IMR-90 (cell line): ENCODE measurements at regions of chr17 and their contacts with region 1.

Region 1: DNA sequence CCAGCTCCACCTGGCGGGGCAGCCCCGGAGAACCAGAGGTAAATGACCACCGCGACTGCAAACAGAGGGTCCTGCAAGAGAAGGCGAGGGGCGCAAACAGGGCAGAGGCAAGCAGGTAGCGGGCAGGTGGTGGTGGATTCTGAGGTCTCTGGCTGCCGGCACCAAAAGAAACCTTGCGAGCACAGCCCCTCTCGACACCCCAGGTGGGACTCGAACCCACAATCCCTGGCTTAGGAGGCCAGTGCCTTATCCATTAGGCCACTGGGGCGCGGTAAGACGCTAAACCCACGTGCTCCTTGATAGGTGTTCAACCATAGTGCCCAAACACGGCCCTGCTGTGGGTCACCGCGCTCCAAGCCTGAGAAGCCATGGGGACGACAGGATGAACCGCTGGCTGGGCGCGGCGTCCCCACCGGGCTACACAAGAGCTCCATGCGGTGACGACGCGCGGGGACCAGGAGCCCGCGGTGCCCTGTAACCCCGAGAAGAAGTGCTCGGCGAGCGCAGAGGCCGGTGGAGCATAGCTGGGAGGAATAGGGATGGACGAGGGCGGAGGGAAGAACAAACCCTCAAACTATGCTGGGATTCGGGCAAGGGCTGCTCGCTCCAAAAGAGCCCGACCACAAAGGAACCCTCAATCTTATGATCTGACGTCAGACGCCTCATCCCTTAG is 12.4 kb downstream of the ATP5PD start:
- DNase-seq: peak; percentile 85
- ATAC-seq: peak; percentile 61
- H3K4me3 ChIP-seq: peak overlapping the region; percentile 70
- H3K27ac ChIP-seq: peak overlapping the region; percentile 73
- H3K4me1 ChIP-seq: peaks cover 2% of the 10 kb centered on the region
- H3K27me3 ChIP-seq: no peaks in the 10 kb centered on the region
- CTCF ChIP-seq: no peak
- POLR2A ChIP-seq: no peak
- RAD21 ChIP-seq: no peak

Region 2: DNA sequence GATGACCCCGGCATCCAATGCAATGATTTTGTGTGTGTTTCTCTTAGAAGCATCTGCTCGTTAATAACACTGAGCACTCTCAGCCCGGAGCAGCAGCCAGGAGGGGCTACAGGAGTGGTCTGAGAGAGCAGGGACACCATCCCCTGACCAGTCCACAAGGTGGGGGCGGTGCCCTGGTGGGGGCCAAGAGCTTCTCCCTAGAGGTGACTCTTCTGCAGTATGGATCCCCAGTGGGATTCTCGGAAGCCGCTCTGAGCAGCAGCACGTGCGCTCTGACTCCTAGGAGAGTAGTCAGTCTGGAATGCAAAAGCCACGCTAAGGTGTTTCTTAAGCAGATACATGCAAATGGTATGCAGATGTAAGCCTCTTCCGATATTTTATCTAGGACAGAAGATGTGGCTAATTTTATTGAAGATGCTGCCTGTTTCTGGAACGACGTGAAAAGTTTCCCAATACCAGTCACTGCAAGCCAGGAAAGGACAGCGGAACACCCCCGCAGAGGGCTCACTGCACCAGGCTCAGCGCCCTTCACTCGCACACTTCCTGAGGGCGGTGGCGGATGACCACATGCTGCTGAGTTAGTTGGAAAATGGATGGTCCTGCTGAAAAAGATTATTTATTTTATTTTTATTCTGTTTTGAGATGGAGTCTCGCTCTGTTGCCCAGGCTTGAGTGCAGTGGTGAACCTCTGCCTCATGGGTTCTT is 151.2 kb before region 1 on chr17:
- CTCF ChIA-PET with region 1: no interaction called
- POLR2A ChIA-PET with region 1: no interaction called
- dilution Hi-C with region 1: no loop called
- in situ Hi-C with region 1: no loop called
- intact Hi-C with region 1: no loop called
- DNase-seq: peak; percentile 20
- ATAC-seq: no peak
- H3K4me3 ChIP-seq: no peak overlapping the region
- H3K27ac ChIP-seq: no peak overlapping the region
- H3K4me1 ChIP-seq: no peaks in the 10 kb centered on the region
- H3K27me3 ChIP-seq: peaks cover 54% of the 10 kb centered on the region
- CTCF ChIP-seq: no peak
- POLR2A ChIP-seq: no peak
- RAD21 ChIP-seq: no peak

Region 3: DNA sequence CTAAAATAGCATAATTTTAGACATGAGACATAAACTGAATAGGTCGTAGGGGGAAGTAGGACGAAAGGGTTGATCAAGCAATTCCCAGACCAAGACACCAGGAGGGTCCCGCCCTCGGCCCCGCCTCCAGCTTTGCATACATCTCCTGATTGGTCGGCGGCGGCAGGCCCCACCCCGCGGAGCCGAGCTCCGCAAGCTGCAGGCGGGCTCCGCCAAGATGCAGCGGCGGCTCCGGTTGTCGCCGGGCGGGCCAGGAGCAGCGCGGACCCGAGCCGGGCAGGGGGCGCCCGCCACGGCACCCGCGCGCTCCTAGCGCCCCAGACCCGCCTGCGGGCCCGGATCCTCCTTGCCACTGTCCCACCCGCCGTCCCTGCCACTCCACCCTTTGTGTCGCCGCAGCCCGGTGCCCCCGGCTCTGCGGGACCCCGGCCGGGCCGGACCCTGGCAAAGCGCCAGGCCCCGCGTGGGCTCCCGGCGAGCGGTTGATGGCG is 46.9 kb before region 1 on chr17 and contains the start of gene CDR2L:
- CTCF ChIA-PET with region 1: interaction called, 5 read pairs
- POLR2A ChIA-PET with region 1: interaction called, 4 read pairs
- dilution Hi-C with region 1: no loop called
- in situ Hi-C with region 1: no loop called
- intact Hi-C with region 1: loop called (anchors 1 kb)
- DNase-seq: peak; percentile 89
- ATAC-seq: peak; percentile 92
- H3K4me3 ChIP-seq: peak within 1 kb of the TSS; percentile 95
- H3K27ac ChIP-seq: peak within 1 kb of the TSS; percentile 92
- H3K4me1 ChIP-seq: peaks cover 12% of the 10 kb centered on the region
- H3K27me3 ChIP-seq: no peaks in the 10 kb centered on the region
- CTCF ChIP-seq: no peak
- POLR2A ChIP-seq: peak; percentile 81
- RAD21 ChIP-seq: no peak
- total RNA-seq, gene CDR2L: 5.6 and 5.7 TPM in 2 replicates

Region 4: DNA sequence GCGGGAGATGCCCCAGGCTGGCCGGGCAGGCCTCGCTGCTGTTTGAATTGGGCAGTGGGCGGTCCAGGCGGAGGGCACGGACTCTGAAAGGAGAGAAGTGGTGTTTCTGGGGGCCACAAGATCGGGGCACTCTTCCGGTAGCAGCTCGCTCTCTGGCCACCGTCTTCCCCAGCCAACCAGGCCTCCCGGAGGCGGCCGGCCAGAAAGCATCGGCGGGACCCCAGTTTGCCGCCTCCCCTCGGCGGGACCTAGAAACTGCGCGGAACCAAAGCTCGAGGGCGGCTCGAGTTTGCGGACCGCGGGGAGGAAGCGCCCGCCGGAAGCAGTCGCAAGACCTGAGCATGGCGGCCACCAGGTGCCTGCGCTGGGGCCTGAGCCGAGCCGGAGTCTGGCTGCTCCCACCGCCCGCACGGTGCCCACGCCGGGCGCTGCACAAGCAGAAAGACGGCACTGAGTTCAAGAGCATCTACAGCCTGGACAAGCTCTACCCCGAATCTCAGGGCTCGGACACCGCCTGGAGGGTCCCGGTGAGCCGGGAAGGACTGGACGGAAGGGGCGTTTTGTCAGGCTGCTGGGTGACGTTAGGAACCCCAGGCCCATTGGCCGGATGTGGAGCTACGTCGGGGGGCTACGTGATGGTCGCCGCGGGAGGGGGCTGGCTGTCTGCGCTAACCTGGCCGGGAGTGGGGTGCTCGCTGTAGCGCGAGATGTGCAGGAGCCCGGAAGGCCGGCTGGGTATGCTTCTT is 21.9 kb before region 1 on chr17 and contains the start of gene MRPL58:
- CTCF ChIA-PET with region 1: interaction called, 3 read pairs
- POLR2A ChIA-PET with region 1: interaction called, 7 read pairs
- dilution Hi-C with region 1: no loop called
- in situ Hi-C with region 1: no loop called
- intact Hi-C with region 1: loop called (anchors 1 kb)
- DNase-seq: peak; percentile 83
- ATAC-seq: peak; percentile 95
- H3K4me3 ChIP-seq: peak within 1 kb of the TSS; percentile 84
- H3K27ac ChIP-seq: peak within 1 kb of the TSS; percentile 86
- H3K4me1 ChIP-seq: peaks cover 6% of the 10 kb centered on the region
- H3K27me3 ChIP-seq: no peaks in the 10 kb centered on the region
- CTCF ChIP-seq: peak; percentile 58
- POLR2A ChIP-seq: peak; percentile 81
- RAD21 ChIP-seq: peak; percentile 45
- total RNA-seq, gene MRPL58: 42.5 and 53.9 TPM in 2 replicates

Region 5: GRCh38 chr17:75046582-75047289 is 12.4 kb after region 1 on chr17 and contains the starts of genes ATP5PD and KCTD2:
- CTCF ChIA-PET with region 1: interaction called, 3 read pairs
- POLR2A ChIA-PET with region 1: interaction called, 3 read pairs
- dilution Hi-C with region 1: no loop called
- in situ Hi-C with region 1: no loop called
- intact Hi-C with region 1: loop called (anchors 1 kb)
- DNase-seq: peak; percentile 96
- ATAC-seq: peak; percentile 98
- H3K4me3 ChIP-seq: peak within 1 kb of the TSS; percentile 92
- H3K27ac ChIP-seq: peak within 1 kb of the TSS; percentile 95
- H3K4me1 ChIP-seq: no peaks in the 10 kb centered on the region; the same call in 1 of the 2 replicates
- H3K27me3 ChIP-seq: no peaks in the 10 kb centered on the region
- CTCF ChIP-seq: no peak
- POLR2A ChIP-seq: peak; percentile 74; the same call in 1 of the 2 replicates
- RAD21 ChIP-seq: no peak
- total RNA-seq, gene ATP5PD: 365 and 373 TPM in 2 replicates
- total RNA-seq, gene KCTD2: 9.1 and 9.4 TPM in 2 replicates

Region 6: DNA sequence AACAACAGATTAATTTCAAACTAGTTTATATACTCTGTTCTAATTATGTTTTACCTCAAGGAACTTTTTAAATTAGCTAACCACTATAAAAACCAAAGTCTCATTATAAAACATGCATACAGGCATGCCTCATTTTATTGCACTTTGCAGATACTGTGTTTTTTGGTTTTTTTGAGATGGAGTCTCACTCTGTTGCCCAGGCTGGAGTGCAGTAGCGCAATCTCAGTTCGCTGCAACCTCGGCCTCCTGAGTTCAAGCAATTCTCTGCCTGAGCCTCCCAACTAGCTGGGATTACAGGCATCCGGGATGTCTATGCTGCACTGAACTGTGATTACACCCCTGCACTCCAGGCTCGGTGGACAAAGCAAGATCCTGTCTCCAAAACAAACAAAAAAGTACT is 128.7 kb after region 1 on chr17:
- CTCF ChIA-PET with region 1: no interaction called
- POLR2A ChIA-PET with region 1: no interaction called
- dilution Hi-C with region 1: no loop called
- in situ Hi-C with region 1: no loop called
- intact Hi-C with region 1: no loop called
- DNase-seq: no peak
- ATAC-seq: no peak
- H3K4me3 ChIP-seq: no peak overlapping the region
- H3K27ac ChIP-seq: no peak overlapping the region
- H3K4me1 ChIP-seq: peaks cover 3% of the 10 kb centered on the region
- H3K27me3 ChIP-seq: no peaks in the 10 kb centered on the region
- CTCF ChIP-seq: no peak
- POLR2A ChIP-seq: no peak
- RAD21 ChIP-seq: no peak